ENCODE measurements at regions of chr11 and their contacts with region 1.

Region 1: GRCh38 chr11:68998390-68998911 is 14.6 kb downstream of the MRGPRF start:
- DNase-seq: peak in 1 of 2 experiments; percentile 43
- H3K4me3 ChIP-seq: no peak overlapping the region
- H3K4me1 ChIP-seq: no peaks in the 10 kb centered on the region
- H3K27me3 ChIP-seq: peaks cover 3% of the 10 kb centered on the region; the same call in 1 of the 2 replicates

Region 2: GRCh38 chr11:68939638-68940555 is 58.6 kb before region 1 on chr11:
- in situ Hi-C with region 1: loop called (anchors 10 kb)
- DNase-seq: no peak
- H3K4me3 ChIP-seq: no peak overlapping the region
- H3K4me1 ChIP-seq: no peaks in the 10 kb centered on the region
- H3K27me3 ChIP-seq: no peaks in the 10 kb centered on the region

Region 3: DNA sequence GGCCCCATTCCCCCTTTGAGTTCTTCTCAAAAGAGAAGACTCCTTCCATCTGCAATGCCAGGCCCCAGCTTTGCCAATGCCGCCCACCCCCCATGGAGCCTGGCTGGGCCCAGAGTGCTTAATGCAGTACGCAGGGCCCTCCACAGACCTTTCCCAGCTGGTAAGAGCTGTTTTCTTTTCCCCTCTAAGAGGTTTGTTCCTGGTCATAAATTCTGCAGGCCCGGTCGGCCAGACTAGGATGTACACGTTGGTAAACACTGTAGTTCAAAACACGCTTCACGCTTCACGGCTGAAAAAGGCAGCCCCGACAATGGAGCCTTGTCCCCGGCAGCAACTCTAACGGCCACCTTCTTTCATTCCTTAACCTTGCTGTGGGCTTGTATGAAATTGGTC is 235.3 kb after region 1 on chr11:
- in situ Hi-C with region 1: no loop called
- DNase-seq: no peak
- H3K4me3 ChIP-seq: no peak overlapping the region
- H3K4me1 ChIP-seq: no peaks in the 10 kb centered on the region
- H3K27me3 ChIP-seq: peaks cover 3% of the 10 kb centered on the region; the same call in 1 of the 2 replicates

Measured in HAP-1 (cell line).